ENCODE measurements at regions of chr4 and their contacts with region 1.

Region 1: DNA sequence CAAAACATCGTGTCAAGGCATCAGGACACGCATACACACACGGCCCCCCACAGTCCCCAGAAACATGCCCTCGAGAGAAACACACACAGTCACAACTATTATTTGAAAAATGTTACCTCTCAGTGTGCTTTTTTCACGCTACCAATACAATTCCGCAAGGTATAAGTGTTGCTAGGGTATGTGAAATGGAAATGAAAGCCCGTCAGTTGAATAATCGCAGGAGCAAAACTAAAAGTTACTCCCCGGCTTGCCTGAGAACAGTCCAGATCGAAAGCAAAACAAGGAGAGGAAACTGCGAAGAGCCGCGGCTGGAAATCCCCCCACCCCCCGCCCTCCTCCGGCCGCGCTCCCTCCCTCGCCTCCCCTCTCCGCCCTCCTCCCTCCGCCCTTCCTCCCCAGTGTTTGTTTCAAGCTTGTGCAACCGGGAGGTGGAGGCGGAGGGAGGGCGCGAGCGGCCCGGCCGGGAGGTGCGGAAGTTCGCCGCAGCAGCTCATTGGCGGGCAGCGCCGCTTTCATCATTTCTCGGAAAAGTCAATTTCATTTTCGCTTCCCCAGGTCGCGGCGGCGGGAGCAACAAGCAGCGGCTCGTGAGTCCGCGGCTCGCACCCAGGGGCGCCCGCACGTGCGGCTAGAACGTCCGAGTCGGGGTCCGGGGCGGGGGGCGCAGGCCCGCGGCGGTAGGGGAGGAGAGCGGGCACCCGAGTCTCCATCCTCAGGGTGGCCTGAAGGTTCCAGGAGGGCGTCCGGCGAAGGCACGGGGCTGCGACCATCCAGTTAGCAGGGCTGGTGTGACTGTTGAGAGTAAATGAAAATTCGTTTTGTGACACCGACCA is at the start of gene IRF2:
- DNase-seq: peak; percentile 89
- H3K4me3 ChIP-seq: peak within 1 kb of the TSS; percentile 87
- CTCF ChIP-seq: peak; percentile 1

Region 2: GRCh38 chr4:184514121-184514988 is 39.9 kb after region 1 on chr4:
- CTCF ChIA-PET with region 1: no interaction called
- POLR2A ChIA-PET with region 1: interaction called, 12 read pairs
- DNase-seq: peak; percentile 69
- H3K4me3 ChIP-seq: peak overlapping the region; percentile 48
- CTCF ChIP-seq: no peak

Measured in AG04449 (cell line).